Colonic mucosa (tissue), 4 donors: ENCODE measurements at regions of chr4 and their contacts with region 1.

Region 1: DNA sequence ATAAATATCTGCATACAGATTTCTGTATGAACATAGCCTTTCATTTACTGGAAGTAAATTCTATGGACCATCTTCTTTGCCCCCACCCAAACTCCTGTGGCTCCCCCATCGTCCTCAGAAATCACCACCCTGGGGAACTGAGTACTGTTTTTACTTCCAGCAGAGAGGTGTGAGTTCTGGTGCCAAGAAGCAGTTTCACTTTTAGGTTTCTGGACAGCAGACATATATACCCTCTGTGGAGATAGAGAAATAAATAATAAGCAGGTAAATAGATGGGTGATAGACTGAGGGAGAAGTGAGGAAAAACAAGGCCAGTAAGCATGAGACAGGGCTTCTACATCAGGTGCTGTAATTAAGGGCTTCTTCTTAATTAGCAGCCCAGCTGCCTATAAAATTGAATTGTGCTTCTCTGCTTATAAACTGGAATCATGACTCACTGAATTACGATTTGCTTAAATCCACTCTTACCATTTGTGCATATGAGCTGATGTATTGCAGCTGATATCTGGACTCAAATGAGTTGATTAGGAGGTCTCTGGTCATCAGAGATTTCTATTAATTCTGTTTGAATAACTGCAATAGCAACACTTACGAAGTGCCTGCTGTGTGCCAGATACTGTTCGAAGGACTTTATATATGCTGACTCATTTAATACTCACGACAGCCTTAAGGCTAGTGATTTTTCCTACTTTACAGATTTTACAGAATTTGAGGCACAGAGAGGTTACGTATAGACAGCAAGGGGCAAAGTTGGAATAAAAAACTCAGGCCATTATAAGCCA is 60.8 kb upstream of the DHX15 start:
- DNase-seq: peak; percentile 17
- H3K4me3 ChIP-seq: no peak overlapping the region
- H3K27ac ChIP-seq: no peak overlapping the region
- H3K4me1 ChIP-seq: peaks cover 11% of the 10 kb centered on the region
- H3K27me3 ChIP-seq: no peaks in the 10 kb centered on the region
- CTCF ChIP-seq: no peak

Region 2: DNA sequence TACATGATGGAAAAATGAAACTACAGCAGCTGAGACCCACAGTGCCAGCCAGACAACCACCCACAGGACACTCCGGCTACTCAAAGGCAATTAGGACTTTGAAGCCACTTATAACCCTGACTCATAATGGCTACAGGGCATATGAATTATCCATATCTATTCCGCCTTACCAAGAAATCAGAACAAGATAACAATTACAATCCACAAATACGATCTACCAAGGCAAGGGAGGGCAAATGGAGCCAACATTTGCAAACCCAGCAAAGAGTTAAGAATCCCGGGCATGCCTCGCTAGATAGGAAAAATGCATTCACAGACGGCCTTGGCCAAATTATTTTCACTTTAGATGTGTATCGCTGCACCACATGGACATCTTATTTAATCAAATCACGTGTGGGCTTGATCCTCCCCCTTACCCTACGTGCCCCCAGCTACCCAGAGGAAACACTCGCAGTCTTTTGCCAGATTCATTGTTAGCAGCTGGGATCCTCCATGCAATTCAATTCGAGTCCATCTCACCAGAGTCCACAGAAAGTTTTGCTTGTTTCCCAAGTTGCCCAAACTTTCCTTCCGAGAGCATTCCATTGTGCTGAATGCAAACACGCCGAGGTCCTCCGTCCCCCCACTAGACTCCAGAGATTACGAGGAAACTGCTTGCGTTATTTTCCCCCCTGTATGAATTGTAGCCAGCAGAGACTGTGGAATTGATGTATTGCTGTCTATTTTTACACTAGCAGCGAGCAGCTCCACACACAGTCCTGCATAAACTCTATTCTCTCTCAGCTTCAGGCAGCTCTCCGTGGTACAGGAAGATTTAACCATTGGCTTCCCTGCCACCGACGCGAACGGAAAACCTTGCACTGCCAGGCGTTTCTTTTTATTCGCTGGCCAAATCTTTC is 756.5 kb before region 1 on chr4:
- intact Hi-C with region 1: no loop called
- DNase-seq: peak; percentile 60
- H3K4me3 ChIP-seq: peak overlapping the region; percentile 49
- H3K27ac ChIP-seq: peak overlapping the region; percentile 69
- H3K4me1 ChIP-seq: no peaks in the 10 kb centered on the region
- H3K27me3 ChIP-seq: no peaks in the 10 kb centered on the region
- CTCF ChIP-seq: no peak

Region 3: GRCh38 chr4:25144870-25145481 is 499.8 kb after region 1 on chr4:
- intact Hi-C with region 1: loop called (anchors 5 kb)
- DNase-seq: no peak
- H3K4me3 ChIP-seq: no peak overlapping the region
- H3K27ac ChIP-seq: no peak overlapping the region
- H3K4me1 ChIP-seq: no peaks in the 10 kb centered on the region
- H3K27me3 ChIP-seq: no peaks in the 10 kb centered on the region
- CTCF ChIP-seq: peak; percentile 40

Region 4: DNA sequence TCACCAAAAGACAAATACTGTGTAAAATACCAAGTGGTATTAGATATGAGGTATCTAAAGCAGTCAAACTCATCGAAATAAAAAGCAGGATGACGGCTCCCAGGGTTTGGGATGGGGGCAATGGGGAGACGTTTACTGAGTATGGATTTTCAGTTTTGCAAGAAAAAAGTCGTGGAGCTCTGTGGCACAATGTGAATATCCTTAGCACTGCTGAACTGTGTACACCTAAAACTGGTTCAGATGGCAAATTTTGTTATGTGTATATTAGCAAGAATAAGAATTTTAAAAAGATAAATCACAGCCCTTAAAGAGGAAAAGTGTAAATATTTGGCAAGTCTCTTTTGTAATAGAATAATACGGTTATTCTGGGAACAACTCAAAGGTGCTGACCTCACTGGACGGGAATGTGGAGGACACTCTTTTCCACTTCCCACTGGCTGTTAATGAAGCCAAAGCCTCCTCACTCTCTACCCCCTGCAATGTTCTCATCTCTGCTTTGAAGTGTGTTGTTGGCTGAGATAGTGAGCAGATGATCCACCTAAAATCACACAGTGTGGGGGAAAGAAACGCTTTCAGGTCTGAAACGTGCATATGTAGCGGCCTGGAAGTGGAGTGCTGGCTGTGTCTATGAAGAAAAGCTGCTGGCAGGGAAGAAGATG is 1168.4 kb after region 1 on chr4:
- intact Hi-C with region 1: no loop called
- DNase-seq: no peak
- H3K4me3 ChIP-seq: no peak overlapping the region
- H3K27ac ChIP-seq: no peak overlapping the region
- H3K4me1 ChIP-seq: no peaks in the 10 kb centered on the region
- H3K27me3 ChIP-seq: no peaks in the 10 kb centered on the region
- CTCF ChIP-seq: no peak